ENCODE measurements at regions of chr21 and their contacts with region 1.

Region 1: DNA sequence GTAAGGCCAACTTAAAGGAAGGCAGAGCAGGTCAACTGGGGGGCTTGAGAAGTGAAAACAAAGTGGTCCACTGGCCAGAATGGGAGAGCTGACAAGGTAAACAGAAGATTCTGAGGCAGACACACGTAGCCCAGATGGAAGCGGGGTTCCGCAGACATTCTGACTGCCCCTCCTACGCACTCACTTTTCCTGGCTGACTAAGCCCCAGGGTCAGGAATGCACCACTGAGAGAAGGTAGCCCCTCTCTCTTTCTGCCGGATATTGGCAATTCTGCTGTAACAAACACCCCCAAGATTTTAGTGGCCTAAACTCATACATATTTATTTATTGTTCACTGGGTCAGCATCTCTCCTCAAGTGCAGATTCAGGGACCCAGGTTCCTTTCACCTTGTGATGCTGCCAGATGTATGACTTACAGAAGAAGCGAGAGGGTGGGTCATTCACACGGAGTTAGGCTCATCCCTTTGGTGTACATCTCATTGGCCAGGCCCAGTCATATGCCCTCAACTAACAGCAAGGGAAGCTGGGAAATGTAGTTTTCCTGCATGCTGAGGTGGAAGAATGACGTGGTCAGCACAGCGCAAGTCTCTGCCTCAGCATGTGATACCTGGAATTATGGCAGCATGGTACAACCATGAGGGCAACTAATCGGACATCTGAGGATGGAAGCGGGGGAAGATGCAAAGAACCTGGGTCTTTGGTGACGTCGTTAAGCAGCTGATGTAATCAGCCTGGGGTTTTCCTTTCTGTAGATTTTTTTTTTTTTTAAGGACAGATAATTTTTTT is 43.4 kb upstream of the MRPS6 start:
- DNase-seq: no peak
- H3K4me3 ChIP-seq: no peak overlapping the region
- H3K27ac ChIP-seq: no peak overlapping the region
- H3K4me1 ChIP-seq: no peaks in the 10 kb centered on the region
- H3K27me3 ChIP-seq: no peaks in the 10 kb centered on the region
- CTCF ChIP-seq: no peak
- POLR2A ChIP-seq: no peak

Region 2: DNA sequence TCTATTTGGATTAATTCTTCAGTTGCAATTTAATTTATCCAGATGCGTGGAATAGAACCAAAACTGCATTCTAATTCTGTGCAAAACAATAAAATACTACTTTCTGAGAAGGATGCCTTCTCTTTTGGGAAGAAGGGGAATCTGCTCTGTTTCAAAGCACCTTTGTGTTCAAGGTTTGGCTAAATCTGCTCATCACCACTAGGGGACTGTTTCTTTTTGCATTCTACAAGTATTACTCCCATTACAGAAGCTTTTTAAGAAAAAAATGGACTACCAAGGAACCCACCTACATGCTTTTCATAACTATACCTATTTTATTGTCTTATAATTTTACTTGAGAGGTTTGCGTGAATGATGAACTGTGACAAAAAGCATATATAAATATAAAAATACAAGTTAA is 61.7 kb after region 1 on chr21:
- intact Hi-C with region 1: loop called (anchors 10 kb)
- DNase-seq: no peak
- H3K4me3 ChIP-seq: no peak overlapping the region
- H3K27ac ChIP-seq: no peak overlapping the region
- H3K4me1 ChIP-seq: peaks cover 0 to 31% (median 11%) of the 10 kb centered on the region in 3 donors
- H3K27me3 ChIP-seq: no peaks in the 10 kb centered on the region
- CTCF ChIP-seq: peak in 2 of 6 experiments; percentile 19 to 42
- POLR2A ChIP-seq: no peak